ENCODE measurements at regions of chr1 and their contacts with region 1.

Region 1: GRCh38 chr1:35229587-35230360 is 36.8 kb upstream of the SFPQ start:
- DNase-seq: no peak
- ATAC-seq: no peak
- H3K4me3 ChIP-seq: no peak overlapping the region
- H3K27ac ChIP-seq: no peak overlapping the region
- H3K4me1 ChIP-seq: no peaks in the 10 kb centered on the region
- H3K27me3 ChIP-seq: no peaks in the 10 kb centered on the region
- CTCF ChIP-seq: no peak
- POLR2A ChIP-seq: no peak

Region 2: GRCh38 chr1:34406833-34407539 is 822.8 kb before region 1 on chr1:
- intact Hi-C with region 1: no loop called
- DNase-seq: no peak
- ATAC-seq: no peak
- H3K4me3 ChIP-seq: no peak overlapping the region
- H3K27ac ChIP-seq: no peak overlapping the region
- H3K4me1 ChIP-seq: no peaks in the 10 kb centered on the region
- H3K27me3 ChIP-seq: no peaks in the 10 kb centered on the region
- CTCF ChIP-seq: no peak
- POLR2A ChIP-seq: no peak

Region 3: GRCh38 chr1:35126546-35126945 is 103.2 kb before region 1 on chr1:
- intact Hi-C with region 1: no loop called
- DNase-seq: no peak
- ATAC-seq: no peak
- H3K4me3 ChIP-seq: no peak overlapping the region
- H3K27ac ChIP-seq: no peak overlapping the region
- H3K4me1 ChIP-seq: no peaks in the 10 kb centered on the region
- H3K27me3 ChIP-seq: no peaks in the 10 kb centered on the region
- CTCF ChIP-seq: no peak
- POLR2A ChIP-seq: no peak

Region 4: DNA sequence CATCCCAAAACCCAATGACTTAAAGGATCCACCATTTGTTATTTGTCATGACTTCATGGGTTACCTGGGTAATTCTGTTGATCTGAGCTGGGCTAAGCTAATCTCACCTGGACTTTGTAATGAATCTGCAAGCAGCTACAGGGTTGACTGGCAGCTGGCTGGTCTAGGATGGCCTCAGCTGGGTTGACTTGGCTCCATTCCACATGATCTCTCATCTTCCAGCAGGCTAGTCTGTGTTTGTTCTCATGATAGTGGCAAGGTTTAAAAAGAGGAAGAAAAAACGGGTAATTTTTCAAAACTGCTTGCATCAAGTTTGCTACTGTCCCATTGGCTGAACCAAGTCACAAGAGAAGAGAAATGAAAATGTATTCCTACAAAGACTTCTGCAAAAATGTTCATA is 13.9 kb after region 1 on chr1:
- intact Hi-C with region 1: loop called in 1 of 10 experiments (anchors 1 kb)
- DNase-seq: no peak
- ATAC-seq: no peak
- H3K4me3 ChIP-seq: no peak overlapping the region
- H3K27ac ChIP-seq: no peak overlapping the region
- H3K4me1 ChIP-seq: no peaks in the 10 kb centered on the region
- H3K27me3 ChIP-seq: no peaks in the 10 kb centered on the region
- CTCF ChIP-seq: no peak
- POLR2A ChIP-seq: no peak

Region 5: DNA sequence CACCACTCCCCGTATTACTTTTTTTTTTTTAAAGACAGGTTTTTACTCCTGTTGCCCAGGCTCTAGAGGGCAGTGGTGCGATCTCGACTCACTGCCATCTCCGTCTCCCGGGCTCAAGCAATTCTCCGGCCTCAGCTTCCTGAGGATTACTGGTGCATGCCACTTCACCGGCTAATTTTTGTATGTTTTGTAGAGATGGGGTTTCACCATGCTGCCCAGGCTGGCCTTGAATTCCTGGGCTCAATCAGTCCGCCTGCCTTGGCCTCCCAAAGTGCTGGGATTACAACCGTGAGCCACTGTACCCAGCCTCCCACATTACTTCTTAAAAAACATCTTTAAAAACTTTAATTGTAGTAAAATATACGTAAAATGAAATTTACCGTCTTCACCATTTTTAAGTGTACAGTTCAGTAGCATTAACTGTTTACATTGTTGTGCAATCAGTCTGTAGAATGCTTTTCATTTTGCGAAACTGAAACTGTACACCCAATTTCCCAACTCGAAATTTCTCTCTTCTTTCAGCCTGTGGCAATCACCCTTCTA is 115.7 kb after region 1 on chr1:
- intact Hi-C with region 1: no loop called
- DNase-seq: no peak
- ATAC-seq: no peak
- H3K4me3 ChIP-seq: peak overlapping the region in 2 of 12 donors; percentile 20 to 53
- H3K27ac ChIP-seq: peak overlapping the region in 1 of 12 donors; percentile 80
- H3K4me1 ChIP-seq: peaks cover 0 to 21% (median 5%) of the 10 kb centered on the region in 12 donors
- H3K27me3 ChIP-seq: no peaks in the 10 kb centered on the region
- CTCF ChIP-seq: no peak
- POLR2A ChIP-seq: no peak

Region 6: GRCh38 chr1:36034692-36035091 is 804.9 kb after region 1 on chr1:
- intact Hi-C with region 1: no loop called
- DNase-seq: no peak
- ATAC-seq: peak in 1 of 4 donors; percentile 63
- H3K4me3 ChIP-seq: no peak overlapping the region
- H3K27ac ChIP-seq: peak overlapping the region in 1 of 12 donors; percentile 83
- H3K4me1 ChIP-seq: peaks cover 0 to 17% (median 0%) of the 10 kb centered on the region in 12 donors
- H3K27me3 ChIP-seq: no peaks in the 10 kb centered on the region
- CTCF ChIP-seq: no peak
- POLR2A ChIP-seq: no peak

Measured in heart left ventricle (tissue), 16 donors.